A549 (cell line): ENCODE measurements at regions of chr15 and their contacts with region 1.

Region 1: GRCh38 chr15:40421246-40422157 is 15.9 kb downstream of the IVD start:
- DNase-seq: peak; percentile 55 to 63
- ATAC-seq: peak; percentile 97
- H3K4me3 ChIP-seq: no peak overlapping the region
- H3K27ac ChIP-seq: no peak overlapping the region
- H3K4me1 ChIP-seq: peaks cover 4% of the 10 kb centered on the region; the same call in 2 of the 3 replicates
- CTCF ChIP-seq: peak; percentile 68
- EP300 ChIP-seq: no peak
- POLR2A ChIP-seq: no peak
- RAD21 ChIP-seq: peak; percentile 81 to 85

Region 2: DNA sequence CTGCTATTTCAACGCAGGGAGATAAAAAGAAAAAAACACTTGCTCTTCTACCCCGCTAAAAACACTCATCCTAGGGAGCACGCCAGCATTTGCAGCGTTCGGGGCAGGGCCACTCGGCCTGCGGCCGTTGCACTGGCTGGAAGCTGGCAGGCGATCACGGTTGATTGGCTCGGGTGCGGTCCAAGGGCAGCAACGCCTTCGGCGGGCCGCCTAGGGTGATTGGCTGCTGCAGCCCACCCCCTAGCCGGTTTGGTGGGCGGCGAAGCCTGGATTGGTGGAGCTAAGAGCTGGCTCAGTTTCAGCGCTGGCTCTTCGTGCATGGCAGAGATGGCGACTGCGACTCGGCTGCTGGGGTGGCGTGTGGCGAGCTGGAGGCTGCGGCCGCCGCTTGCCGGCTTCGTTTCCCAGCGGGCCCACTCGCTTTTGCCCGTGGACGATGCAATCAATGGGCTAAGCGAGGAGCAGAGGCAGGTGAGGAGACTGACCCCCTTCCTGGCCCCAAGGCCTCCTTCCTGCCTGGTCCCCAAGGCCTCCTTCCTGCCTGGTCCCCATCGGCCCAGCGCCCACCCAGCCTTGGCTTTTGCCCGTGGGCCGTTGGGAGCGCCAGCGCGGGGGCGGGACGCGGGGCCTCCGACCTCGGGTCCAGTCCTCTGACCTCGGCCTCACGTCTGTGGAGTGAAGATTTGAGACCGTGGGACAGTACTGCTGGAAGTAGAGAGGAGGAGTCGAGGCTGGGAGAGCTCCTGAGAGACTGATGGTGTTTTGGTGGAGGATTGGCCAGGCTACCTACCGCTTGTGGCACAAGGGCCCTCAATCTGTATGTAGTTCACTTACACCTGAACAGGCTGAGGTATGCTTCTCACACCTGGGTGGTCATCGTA is 15.8 kb before region 1 on chr15 and contains the start of gene IVD:
- CTCF ChIA-PET with region 1: interaction called, 39 read pairs
- POLR2A ChIA-PET with region 1: no interaction called
- DNase-seq: peak; percentile 79 to 88
- ATAC-seq: peak; percentile 99
- H3K4me3 ChIP-seq: peak within 1 kb of the TSS; percentile 60
- H3K27ac ChIP-seq: peak within 1 kb of the TSS; percentile 73 to 91
- H3K4me1 ChIP-seq: peaks cover 2% of the 10 kb centered on the region; the same call in 1 of the 3 replicates
- CTCF ChIP-seq: no peak
- EP300 ChIP-seq: no peak
- POLR2A ChIP-seq: peak; percentile 49
- RAD21 ChIP-seq: no peak
- polyA plus RNA-seq, gene IVD: 10.2 and 14.8 TPM in 2 replicates

Region 3: GRCh38 chr15:40458495-40459394 is 37.2 kb after region 1 on chr15:
- CTCF ChIA-PET with region 1: no interaction called
- POLR2A ChIA-PET with region 1: no interaction called
- DNase-seq: no peak
- ATAC-seq: no peak
- H3K4me3 ChIP-seq: no peak overlapping the region
- H3K27ac ChIP-seq: no peak overlapping the region
- H3K4me1 ChIP-seq: peaks cover 30% of the 10 kb centered on the region
- CTCF ChIP-seq: no peak
- EP300 ChIP-seq: no peak
- POLR2A ChIP-seq: no peak
- RAD21 ChIP-seq: no peak